ENCODE measurements at regions of chr3 and their contacts with region 1.

Region 1: DNA sequence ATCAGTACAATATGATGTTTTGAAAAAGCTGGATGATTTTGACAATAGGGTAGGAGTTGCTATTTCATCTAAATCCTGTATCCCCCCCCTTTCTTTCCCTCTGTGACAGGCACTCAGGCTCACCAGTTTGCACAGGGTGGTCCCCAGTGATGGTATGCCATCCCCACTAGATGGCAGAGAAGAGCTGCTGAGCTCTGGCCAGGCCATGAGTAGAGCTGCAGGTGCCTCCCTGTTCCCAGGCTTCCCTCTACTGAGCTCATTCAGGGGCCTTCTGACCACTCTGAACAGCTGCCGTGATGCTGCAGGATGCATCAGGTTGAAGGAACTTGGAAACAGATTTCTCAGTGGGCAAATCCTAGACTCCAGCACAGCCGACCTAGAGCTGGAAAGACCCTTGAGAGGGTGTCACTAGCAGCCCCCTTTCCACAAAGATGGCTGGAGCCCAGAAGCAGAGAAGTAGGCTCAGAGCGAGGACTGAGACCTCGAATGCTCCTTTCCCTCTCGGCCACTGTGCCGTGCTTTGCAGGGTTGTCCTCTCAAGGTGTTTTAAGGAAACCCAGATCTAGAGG is 45.1 kb downstream of the EFCAB12 start:
- DNase-seq: peak; percentile 61
- H3K4me3 Mint-ChIP-seq: no peak overlapping the region
- H3K27ac Mint-ChIP-seq: no peak overlapping the region
- H3K4me1 Mint-ChIP-seq: no peaks in the 10 kb centered on the region
- H3K27me3 Mint-ChIP-seq: no peaks in the 10 kb centered on the region

Region 2: GRCh38 chr3:129606636-129607390 is 223.4 kb after region 1 on chr3 and contains the start of gene PLXND1:
- CTCF ChIA-PET with region 1: interaction called, 3 read pairs
- POLR2A ChIA-PET with region 1: no interaction called
- intact Hi-C with region 1: loop called (anchors 5 kb)
- DNase-seq: peak; percentile 46
- H3K4me3 Mint-ChIP-seq: peak within 1 kb of the TSS; percentile 76
- H3K27ac Mint-ChIP-seq: no peak within 1 kb of the TSS
- H3K4me1 Mint-ChIP-seq: peaks cover 12% of the 10 kb centered on the region
- H3K27me3 Mint-ChIP-seq: peaks cover 14% of the 10 kb centered on the region
- total RNA-seq, gene PLXND1: 7.2 to 8.6 TPM

Measured in activated CD4-positive, alpha-beta memory T cell treated with anti-CD3 and anti-CD28 coated beads for 36 hours (primary cell).